ENCODE measurements at regions of chr17 and their contacts with region 1.

Region 1: DNA sequence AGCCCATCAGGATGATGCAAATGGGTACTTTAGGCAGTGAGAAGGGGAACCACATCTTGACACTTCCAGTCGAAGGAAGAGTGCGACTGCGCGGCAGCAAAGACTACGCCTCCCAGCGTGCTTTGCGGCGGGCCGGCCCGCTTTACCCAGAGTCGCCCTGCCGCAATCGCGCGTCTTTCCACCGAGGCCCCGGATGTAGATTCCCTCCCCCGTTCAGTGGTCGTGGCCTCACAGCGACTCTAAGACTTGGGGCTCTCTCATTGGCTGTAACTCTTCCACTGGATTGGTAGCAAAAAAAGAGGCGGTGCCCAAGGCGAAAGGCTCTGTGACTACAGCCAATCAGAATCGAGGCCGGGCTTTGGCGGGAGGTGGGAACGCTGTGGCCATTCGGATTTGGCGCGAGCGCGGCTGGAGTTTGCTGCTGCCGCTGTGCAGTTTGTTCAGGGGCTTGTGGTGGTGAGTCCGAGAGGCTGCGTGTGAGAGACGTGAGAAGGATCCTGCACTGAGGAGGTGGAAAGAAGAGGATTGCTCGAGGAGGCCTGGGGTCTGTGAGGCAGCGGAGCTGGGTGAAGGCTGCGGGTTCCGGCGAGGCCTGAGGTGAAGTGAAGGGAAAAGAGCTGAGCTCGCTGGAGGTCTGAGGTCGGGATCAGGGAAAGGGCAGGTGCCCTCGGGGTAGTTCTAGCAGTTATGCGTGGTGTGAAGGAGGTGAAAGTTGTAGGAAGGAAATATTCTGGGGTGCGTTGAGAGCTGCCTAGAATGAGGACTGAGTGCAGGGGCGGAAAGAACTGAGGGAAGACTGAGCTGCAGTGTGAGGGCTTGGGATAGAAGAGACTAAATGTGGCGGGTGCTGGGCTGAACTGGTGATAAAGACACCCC is at the start of gene CDC6:
- H3K4me3 ChIP-seq: peak within 1 kb of the TSS; percentile 96
- H3K27ac ChIP-seq: peak within 1 kb of the TSS; percentile 95
- H3K4me1 ChIP-seq: peaks cover 3% of the 10 kb centered on the region
- CTCF ChIP-seq: 0 out of 2 replicates have a peak, but pooled peaks have one; percentile 9

Region 2: GRCh38 chr17:40203131-40203530 is 84.6 kb before region 1 on chr17:
- CTCF ChIA-PET with region 1: interaction called, 65 read pairs
- POLR2A ChIA-PET with region 1: interaction called, 14 read pairs
- H3K4me3 ChIP-seq: no peak overlapping the region
- H3K27ac ChIP-seq: no peak overlapping the region
- H3K4me1 ChIP-seq: no peaks in the 10 kb centered on the region
- CTCF ChIP-seq: no peak

Region 3: DNA sequence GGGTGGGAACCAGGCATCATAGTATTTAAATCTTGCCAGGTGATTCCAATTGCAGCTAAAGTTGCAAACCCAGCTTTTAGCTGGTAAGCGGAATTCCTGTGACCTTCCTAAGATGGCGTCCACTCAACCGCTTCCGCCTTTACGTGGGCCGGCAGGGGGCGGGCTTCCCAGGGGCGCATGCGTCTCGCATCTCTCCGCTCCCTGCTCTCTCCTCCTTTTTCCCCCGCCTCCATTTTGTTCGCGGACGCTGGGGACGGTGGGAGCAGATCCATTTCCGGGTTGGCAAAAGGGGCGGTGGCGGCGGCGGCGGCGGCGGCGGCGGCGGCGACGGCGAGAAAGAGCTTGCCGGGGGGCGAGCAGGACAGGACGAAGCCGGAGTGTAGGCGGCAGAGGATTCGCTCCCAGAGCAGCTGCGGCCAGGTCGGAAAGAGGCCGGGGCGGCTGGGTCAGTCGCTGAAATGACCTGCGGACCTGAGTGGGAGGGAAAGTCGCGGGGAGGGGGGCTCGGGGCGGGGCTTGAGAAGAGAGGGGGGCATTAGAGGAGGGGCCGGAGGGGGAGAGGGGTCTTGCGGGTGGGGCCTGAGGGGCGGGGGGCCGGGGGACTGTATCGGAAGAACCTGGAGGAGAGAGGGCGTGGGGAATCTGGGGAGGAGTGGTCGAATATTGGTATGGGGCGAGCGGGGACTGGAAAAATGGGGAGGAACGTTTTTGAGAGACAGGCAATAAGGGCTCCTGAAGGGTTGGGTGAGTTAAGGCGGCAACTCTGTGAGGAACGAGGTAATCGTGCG is 68.5 kb before region 1 on chr17 and contains the start of gene WIPF2:
- CTCF ChIA-PET with region 1: interaction called, 9 read pairs
- POLR2A ChIA-PET with region 1: interaction called, 33 read pairs
- H3K4me3 ChIP-seq: peak within 1 kb of the TSS; percentile 80
- H3K27ac ChIP-seq: peak within 1 kb of the TSS; percentile 92
- H3K4me1 ChIP-seq: peaks cover 3% of the 10 kb centered on the region
- CTCF ChIP-seq: peak; percentile 96

Region 4: GRCh38 chr17:40317880-40318829 is 30.4 kb after region 1 on chr17:
- CTCF ChIA-PET with region 1: interaction called, 7 read pairs
- POLR2A ChIA-PET with region 1: interaction called, 11 read pairs
- H3K4me3 ChIP-seq: peak overlapping the region; percentile 66
- H3K27ac ChIP-seq: peak overlapping the region; percentile 86
- H3K4me1 ChIP-seq: peaks cover 44% of the 10 kb centered on the region
- CTCF ChIP-seq: no peak